ENCODE measurements at regions of chr7 and their contacts with region 1.

Region 1: DNA sequence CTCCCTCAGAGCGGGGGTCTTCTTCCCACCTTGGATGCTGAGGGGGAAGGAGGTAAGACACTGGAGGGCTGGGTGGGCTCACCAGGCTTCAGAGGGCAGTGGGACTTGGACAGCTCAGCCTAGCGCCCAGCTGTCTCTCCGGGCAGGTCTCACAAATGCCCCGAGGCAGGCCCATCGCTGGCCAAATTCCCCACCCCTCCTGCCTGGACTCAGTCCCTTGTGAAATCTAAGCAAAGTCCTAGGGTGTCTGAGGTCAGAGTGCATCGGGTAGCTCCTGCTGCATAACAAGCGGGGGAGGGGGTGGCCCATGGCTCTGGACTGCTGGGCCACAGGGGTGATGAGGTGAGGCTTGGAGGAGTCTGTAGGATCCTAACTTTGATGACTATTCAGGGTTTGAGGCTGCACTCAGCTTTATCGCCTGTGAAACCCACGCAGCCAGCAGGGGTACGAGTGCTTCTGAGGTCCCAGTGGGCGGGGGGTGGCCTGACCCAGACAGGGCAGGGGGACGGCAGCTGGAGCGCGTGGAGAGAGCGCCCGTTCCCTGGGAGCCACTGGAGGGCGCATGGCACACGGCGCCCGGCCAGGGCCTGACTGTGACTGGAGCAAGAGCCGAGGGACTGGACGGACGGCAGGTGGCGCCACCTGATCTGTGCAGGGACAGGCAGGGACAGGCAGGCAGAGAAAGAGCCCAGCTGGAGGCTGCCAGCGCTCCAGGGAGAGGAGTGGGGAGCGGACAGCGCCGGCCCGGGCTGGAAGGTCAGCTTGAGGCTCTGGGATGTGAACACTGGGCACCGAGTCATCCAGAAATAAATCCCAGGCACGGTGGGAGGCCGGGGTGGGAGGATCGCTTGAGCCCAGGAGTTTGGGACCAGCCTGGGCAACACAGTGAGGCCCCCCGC is 10.0 kb downstream of the CYP2W1 start:
- DNase-seq: peak; percentile 45
- H3K4me3 ChIP-seq: no peak overlapping the region
- H3K27me3 ChIP-seq: no peaks in the 10 kb centered on the region
- CTCF ChIP-seq: peak; percentile 100

Region 2: DNA sequence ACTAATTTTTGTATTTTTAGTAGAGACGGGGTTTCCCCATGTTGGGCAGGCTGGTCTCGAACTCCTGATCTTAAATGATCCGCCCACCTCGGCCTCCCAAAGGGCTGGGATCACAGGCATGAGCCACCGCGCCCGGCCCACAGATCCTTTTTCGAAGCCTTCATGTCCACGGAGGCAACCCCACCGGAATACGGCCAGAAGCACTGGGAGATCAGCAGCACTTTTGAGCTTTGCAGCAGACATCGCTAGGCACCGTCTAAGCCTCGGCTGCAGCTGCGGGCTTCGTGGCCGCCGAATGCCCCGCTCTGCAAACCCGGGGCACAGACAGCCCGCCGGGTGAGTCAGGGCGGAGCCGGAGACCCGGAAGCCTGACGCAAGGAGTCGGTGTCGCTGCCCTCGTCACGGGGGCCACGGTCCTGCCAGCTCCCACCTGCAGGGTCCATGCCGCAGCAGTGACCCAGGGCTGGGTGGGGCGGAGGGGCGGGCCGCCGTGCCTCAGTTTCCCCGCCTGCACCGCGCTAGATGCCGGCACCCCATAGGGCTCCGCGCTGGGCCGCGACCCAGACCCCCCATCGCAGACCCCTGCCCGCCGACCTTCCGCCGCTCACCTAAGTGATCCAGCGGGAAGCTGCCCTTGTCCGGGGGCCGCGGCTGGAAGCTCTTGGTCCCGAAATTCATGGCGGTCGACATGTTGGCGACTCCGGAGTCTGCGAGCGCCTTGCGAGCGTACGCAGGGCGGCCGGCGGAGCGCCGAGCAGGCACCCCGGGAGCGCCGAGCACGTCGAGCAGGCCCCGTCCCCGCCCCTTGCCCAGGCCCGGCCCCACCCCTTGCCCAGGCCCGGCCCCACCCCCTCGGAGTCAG is 17.9 kb before region 1 on chr7 and contains the start of gene COX19:
- CTCF ChIA-PET with region 1: interaction called, 68 read pairs
- POLR2A ChIA-PET with region 1: no interaction called
- DNase-seq: peak; percentile 26
- H3K4me3 ChIP-seq: peak within 1 kb of the TSS; percentile 100
- H3K27me3 ChIP-seq: no peaks in the 10 kb centered on the region
- CTCF ChIP-seq: no peak
- polyA plus RNA-seq, gene COX19: 5.5 and 5.6 TPM in 2 replicates

Region 3: GRCh38 chr7:1020849-1021251 is 27.9 kb after region 1 on chr7:
- CTCF ChIA-PET with region 1: interaction called, 20 read pairs
- POLR2A ChIA-PET with region 1: no interaction called
- DNase-seq: no peak
- H3K4me3 ChIP-seq: no peak overlapping the region
- H3K27me3 ChIP-seq: no peaks in the 10 kb centered on the region
- CTCF ChIP-seq: no peak

Region 4: GRCh38 chr7:1059200-1060091 is 66.5 kb after region 1 on chr7:
- CTCF ChIA-PET with region 1: interaction called, 367 read pairs
- POLR2A ChIA-PET with region 1: no interaction called
- DNase-seq: no peak
- H3K4me3 ChIP-seq: no peak overlapping the region
- H3K27me3 ChIP-seq: no peaks in the 10 kb centered on the region
- CTCF ChIP-seq: no peak

Region 5: DNA sequence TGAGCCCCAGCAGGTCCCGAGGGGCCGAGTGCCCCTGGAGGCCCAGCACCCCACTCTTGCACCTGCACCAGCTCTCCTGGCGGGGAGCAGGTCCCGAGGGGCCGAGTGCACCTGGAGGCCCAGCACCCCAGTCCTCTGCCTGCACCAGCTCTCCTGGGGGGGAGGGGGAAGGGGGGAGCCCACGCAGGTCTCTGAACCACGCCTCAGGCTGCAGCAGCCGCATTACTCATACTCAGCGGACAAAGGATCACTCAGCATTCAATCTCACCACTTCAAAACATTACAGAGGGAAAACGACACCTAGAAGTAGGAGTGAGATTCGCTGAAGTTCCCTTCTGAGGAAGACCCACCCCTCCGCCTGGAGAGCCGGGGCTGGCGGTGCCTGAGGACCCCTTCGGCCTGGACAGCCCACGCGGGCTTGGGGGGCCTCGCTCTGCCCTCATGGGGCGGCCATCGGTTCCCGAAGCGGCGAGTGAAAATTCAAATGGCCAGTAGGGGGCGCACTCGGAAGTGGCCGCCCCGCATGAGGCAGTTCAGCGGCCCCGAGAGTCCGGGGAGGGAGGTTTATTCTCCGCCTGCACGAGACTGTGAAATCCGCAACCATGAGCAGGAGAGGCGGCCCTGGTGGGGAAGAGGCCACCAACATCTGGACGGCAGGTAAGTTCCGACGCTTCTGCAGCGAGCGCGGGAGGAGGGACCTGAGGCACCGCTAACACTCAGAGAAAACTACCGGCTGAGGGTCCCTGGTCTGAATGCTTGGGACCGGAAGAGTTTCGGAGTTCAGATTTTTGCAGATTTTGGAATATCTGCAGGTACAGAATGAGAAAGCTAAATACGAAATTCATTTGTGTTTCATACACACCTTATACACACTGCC is 93.9 kb after region 1 on chr7:
- CTCF ChIA-PET with region 1: interaction called, 42 read pairs
- POLR2A ChIA-PET with region 1: no interaction called
- DNase-seq: no peak
- H3K4me3 ChIP-seq: peak overlapping the region; percentile 48
- H3K27me3 ChIP-seq: no peaks in the 10 kb centered on the region
- CTCF ChIP-seq: peak; percentile 89

Region 6: GRCh38 chr7:1169409-1170368 is 176.7 kb after region 1 on chr7:
- CTCF ChIA-PET with region 1: interaction called, 51 read pairs
- POLR2A ChIA-PET with region 1: no interaction called
- DNase-seq: no peak
- H3K4me3 ChIP-seq: peak overlapping the region; percentile 27
- H3K27me3 ChIP-seq: no peaks in the 10 kb centered on the region
- CTCF ChIP-seq: peak; percentile 88

Measured in BJ (cell line).